Naive thymus-derived CD4-positive, alpha-beta T cell (primary cell): ENCODE measurements at regions of chr1 and their contacts with region 1.

Region 1: GRCh38 chr1:212455803-212456528 is 23.2 kb downstream of the NENF start:
- DNase-seq: peak; percentile 53 to 84 (median 69)
- ATAC-seq: peak; percentile 84
- H3K4me3 ChIP-seq: no peak overlapping the region
- H3K4me3 Mint-ChIP-seq: no peak overlapping the region
- H3K27ac ChIP-seq: no peak overlapping the region
- H3K27ac Mint-ChIP-seq: no peak overlapping the region
- H3K4me1 ChIP-seq: no peaks in the 10 kb centered on the region
- H3K4me1 Mint-ChIP-seq: peaks cover 0 to 12% (median 0%) of the 10 kb centered on the region in 7 donors
- H3K27me3 ChIP-seq: no peaks in the 10 kb centered on the region
- H3K27me3 Mint-ChIP-seq: no peaks in the 10 kb centered on the region

Region 2: DNA sequence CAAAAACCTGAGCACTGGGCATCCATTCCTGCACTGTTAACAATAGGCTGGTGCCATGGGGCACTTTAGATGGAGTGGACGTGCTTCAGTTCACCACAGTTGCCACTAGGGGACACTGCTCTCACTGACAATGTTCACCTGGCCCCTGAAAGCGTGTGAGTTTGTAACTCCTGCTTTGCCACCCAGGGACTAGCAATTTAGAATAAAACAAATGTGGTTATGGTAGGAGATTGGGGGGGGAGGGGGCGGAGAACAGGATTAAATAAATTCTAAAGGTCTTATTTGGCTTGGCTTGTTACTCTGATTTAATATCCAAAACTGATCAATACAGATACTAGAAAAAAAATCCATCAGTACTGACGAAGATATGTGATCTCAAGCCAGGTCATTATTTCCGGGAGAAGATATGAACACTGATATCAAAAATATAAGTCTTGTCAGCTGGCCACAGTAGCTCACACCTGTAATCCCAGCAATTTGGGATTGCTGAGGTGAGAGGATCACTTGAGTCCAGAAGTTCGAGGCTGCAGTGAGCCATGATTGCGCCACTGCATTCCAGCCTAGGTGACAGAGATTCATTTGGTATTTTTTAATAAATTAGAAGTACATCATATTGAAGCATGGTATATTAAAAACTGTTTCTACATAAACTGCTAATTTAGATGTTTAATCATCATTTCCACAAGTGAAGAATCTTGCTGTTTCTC is 443.8 kb before region 1 on chr1:
- CTCF ChIA-PET with region 1: interaction called, 7 read pairs
- POLR2A ChIA-PET with region 1: no interaction called
- intact Hi-C with region 1: loop called (anchors 1 kb)
- DNase-seq: peak; percentile 16 to 55 (median 46)
- ATAC-seq: peak; percentile 100
- H3K4me3 ChIP-seq: no peak overlapping the region
- H3K4me3 Mint-ChIP-seq: no peak overlapping the region
- H3K27ac ChIP-seq: no peak overlapping the region
- H3K27ac Mint-ChIP-seq: no peak overlapping the region
- H3K4me1 ChIP-seq: no peaks in the 10 kb centered on the region
- H3K4me1 Mint-ChIP-seq: peaks cover 0 to 3% (median 0%) of the 10 kb centered on the region in 7 donors
- H3K27me3 ChIP-seq: no peaks in the 10 kb centered on the region
- H3K27me3 Mint-ChIP-seq: no peaks in the 10 kb centered on the region

Region 3: DNA sequence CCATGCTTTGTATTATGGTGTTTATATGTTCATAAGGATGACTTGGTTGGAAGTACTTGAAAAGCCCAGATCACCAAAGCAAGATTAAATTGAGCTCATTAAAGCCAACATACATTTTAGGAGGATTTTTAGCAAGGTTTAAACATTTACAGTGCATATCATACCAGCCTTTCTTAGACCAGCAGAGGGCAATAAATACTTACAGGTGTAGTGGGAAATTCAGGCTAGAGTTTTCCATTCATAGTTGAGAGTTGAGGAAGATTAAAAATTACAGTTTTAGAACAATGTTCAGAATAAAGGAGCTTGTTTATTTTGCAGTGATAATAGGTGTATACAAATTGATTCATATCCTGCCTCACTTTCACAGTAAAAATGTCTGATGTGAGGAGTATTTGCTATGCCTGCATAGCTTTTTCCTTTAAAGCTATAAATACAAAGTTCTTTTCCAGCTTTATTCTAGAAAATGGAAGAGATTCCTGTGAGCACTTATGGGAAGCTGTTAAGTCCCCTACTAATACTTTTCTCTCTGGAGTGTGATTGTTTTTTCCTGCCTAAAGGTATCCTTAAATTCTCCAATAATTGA is 385.2 kb before region 1 on chr1:
- CTCF ChIA-PET with region 1: interaction called, 166 read pairs
- POLR2A ChIA-PET with region 1: interaction called, 10 read pairs
- intact Hi-C with region 1: loop called (anchors 1 kb)
- DNase-seq: peak in 7 of 9 donors; percentile 11 to 63 (median 47)
- ATAC-seq: peak; percentile 66
- H3K4me3 ChIP-seq: no peak overlapping the region
- H3K4me3 Mint-ChIP-seq: no peak overlapping the region
- H3K27ac ChIP-seq: no peak overlapping the region
- H3K27ac Mint-ChIP-seq: no peak overlapping the region
- H3K4me1 ChIP-seq: no peaks in the 10 kb centered on the region
- H3K4me1 Mint-ChIP-seq: peaks cover 0 to 7% (median 0%) of the 10 kb centered on the region in 7 donors
- H3K27me3 ChIP-seq: no peaks in the 10 kb centered on the region
- H3K27me3 Mint-ChIP-seq: no peaks in the 10 kb centered on the region

Region 4: GRCh38 chr1:212368073-212368484 is 87.9 kb before region 1 on chr1:
- CTCF ChIA-PET with region 1: interaction called, 6 read pairs
- POLR2A ChIA-PET with region 1: no interaction called
- intact Hi-C with region 1: loop called (anchors 1 to 5 kb)
- DNase-seq: peak in 7 of 9 donors; percentile 34 to 67 (median 63)
- ATAC-seq: peak; percentile 95
- H3K4me3 ChIP-seq: no peak overlapping the region
- H3K4me3 Mint-ChIP-seq: no peak overlapping the region
- H3K27ac ChIP-seq: no peak overlapping the region
- H3K27ac Mint-ChIP-seq: peak overlapping the region in 4 of 9 donors; percentile 5 to 87 (median 52)
- H3K4me1 ChIP-seq: no peaks in the 10 kb centered on the region
- H3K4me1 Mint-ChIP-seq: peaks cover 0 to 9% (median 0%) of the 10 kb centered on the region in 7 donors
- H3K27me3 ChIP-seq: no peaks in the 10 kb centered on the region
- H3K27me3 Mint-ChIP-seq: no peaks in the 10 kb centered on the region

Region 5: DNA sequence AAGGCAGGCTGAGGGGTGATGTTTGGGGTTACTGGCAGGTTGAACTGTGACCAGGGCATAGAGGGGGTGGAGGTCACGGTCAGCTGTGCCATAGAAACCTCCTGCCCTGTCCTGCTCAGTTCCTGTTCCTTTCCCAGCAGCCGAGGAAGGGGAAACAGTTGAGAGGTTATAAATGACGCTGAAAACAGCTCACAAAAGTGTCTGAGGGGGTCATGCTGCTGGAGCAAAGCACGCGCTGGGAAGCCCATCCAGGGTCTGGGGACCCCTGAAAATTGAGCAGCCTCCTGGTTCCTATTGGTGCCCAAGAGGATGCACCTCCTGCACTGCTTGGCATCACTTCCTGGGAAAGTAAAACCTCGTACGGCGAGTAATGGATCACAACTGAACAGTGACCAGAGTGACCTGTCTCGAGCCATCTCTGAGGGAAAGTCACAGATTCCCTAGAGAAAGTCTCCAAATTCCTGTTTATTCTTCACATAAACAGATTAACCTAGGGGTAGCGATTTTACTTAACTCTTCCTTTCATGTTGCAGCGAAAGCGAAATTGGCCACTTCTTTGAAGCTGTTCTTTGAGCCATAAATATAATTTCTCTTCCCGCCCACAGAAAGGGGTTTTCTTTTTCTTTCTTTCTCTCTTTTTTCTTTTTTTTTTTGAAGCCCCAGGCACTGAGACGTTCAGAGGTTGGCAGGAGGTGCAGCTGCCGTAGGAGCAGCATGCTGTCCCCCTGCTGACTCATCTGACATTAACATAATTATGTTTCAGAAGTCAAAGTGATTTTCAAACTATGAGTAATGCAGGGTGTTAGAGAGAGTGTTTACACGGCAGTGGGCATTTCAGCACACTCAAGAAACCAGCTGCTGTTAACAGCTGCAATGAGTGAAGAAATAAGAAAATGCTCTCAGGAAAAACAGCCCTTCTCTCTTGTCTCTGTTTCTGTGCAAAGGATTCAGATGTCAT is 110.8 kb after region 1 on chr1:
- CTCF ChIA-PET with region 1: no interaction called
- POLR2A ChIA-PET with region 1: no interaction called
- intact Hi-C with region 1: no loop called
- DNase-seq: peak in 7 of 9 donors; percentile 23 to 66 (median 30)
- ATAC-seq: peak; percentile 96
- H3K4me3 ChIP-seq: peak overlapping the region; percentile 78
- H3K4me3 Mint-ChIP-seq: peak overlapping the region; percentile 80 to 98 (median 88)
- H3K27ac ChIP-seq: peak overlapping the region; percentile 31
- H3K27ac Mint-ChIP-seq: peak overlapping the region; percentile 62 to 90 (median 77)
- H3K4me1 ChIP-seq: peaks cover 0 to 6% of the 10 kb centered on the region in 2 donors
- H3K4me1 Mint-ChIP-seq: peaks cover 9 to 27% (median 15%) of the 10 kb centered on the region in 7 donors
- H3K27me3 ChIP-seq: no peaks in the 10 kb centered on the region
- H3K27me3 Mint-ChIP-seq: peaks cover 0 to 43% (median 0%) of the 10 kb centered on the region in 5 donors

Region 6: DNA sequence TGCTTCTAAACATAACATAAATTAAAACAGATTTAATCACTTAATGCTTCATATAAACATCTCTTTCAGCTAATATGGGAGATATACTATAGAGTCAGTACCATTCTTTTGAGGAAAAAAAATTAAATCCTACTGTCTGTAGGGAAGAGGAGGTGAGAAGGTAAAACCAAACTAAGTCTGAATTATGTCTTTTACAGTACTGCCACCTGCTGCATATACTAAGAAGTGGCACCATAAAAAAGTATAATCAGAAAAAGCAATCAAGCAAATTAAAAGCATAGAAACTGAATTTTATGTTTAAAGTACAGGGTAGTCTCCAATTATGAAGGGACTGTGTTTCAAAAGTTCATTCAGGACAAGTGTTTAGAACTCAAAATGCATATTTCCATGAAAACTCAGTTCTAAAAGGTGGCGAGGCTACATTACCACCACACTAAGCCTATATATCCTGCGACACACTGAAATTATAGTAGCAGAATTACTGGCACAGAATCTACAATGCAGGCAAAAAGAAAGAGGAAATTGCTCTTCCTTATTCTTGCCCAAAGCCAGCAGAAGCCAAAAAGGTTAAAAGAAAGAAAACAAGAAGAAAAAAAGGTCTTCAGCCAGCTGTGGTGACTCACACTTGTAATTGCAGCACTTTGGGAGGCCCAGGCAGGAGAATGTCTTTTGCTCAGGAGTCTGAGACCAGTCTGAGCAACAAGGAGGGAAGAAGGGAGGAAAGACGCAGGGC is 326.6 kb after region 1 on chr1:
- CTCF ChIA-PET with region 1: no interaction called
- POLR2A ChIA-PET with region 1: no interaction called
- intact Hi-C with region 1: loop called in 1 of 2 experiments (anchors 5 kb)
- DNase-seq: peak in 6 of 9 donors; percentile 4 to 45 (median 34)
- ATAC-seq: peak; percentile 73
- H3K4me3 ChIP-seq: no peak overlapping the region
- H3K4me3 Mint-ChIP-seq: no peak overlapping the region
- H3K27ac ChIP-seq: no peak overlapping the region
- H3K27ac Mint-ChIP-seq: peak overlapping the region in 1 of 9 donors; percentile 31
- H3K4me1 ChIP-seq: no peaks in the 10 kb centered on the region
- H3K4me1 Mint-ChIP-seq: peaks cover 0 to 18% (median 6%) of the 10 kb centered on the region in 7 donors
- H3K27me3 ChIP-seq: no peaks in the 10 kb centered on the region
- H3K27me3 Mint-ChIP-seq: no peaks in the 10 kb centered on the region